ENCODE measurements at regions of chr2 and their contacts with region 1.

Region 1: DNA sequence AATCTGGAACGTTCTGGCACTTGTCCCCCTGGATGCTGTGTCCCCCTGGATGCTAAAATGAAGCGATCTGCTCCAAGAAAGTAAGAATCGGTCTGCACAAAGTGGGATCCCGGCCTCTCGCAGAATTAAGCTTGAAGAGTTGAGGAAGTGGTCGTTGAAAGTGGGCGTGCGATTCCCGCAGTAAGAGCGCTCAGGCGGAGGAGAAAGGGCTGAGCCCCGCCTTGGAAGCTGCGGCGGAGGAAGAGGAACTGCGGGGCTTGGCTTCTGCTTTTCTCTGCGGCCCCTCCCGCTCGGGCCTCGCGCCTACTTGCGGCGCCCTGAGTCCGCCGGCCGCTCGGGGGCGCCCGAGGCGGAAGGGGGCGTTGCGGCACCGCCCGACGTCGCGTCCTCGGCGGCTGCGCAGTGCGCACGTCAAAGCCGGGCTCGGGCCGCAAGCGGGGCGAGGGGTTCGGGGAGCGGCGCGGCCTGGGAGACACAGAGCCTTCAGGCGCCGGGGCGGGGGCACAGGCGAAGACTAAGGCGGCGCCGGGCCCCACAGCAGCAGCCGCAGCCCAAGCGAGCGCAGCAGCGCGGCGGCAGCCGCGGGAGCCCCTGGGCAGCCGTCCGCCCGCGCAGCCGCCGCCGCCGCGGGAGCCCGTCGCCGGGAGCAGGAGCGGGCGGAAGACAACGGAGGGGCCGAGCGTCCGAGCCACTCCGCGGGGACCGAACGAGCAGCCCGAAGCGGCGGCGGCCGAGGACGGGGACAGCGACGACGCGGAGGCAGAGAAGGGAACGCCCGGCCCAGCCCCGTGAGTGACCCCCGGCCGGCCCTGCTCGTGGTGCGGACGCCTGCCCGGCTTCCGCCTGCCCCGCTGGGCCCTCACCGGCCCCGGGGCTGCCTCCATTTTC is at the start of gene CAB39:
- DNase-seq: peak; percentile 73 to 97 (median 84)
- ATAC-seq: peak; percentile 81
- H3K4me3 ChIP-seq: peak within 1 kb of the TSS; percentile 88
- H3K4me3 Mint-ChIP-seq: peak within 1 kb of the TSS; percentile 93
- H3K27ac ChIP-seq: peak within 1 kb of the TSS; percentile 63 to 84
- H3K27ac Mint-ChIP-seq: peak within 1 kb of the TSS; percentile 94
- H3K4me1 ChIP-seq: peaks cover 31% of the 10 kb centered on the region
- H3K4me1 Mint-ChIP-seq: peaks cover 48% of the 10 kb centered on the region
- H3K27me3 ChIP-seq: no peaks in the 10 kb centered on the region
- H3K27me3 Mint-ChIP-seq: no peaks in the 10 kb centered on the region
- CTCF ChIP-seq: peak; percentile 75
- total RNA-seq, gene CAB39: 44.8 to 45.3 TPM

Region 2: GRCh38 chr2:230219419-230220331 is 493.0 kb before region 1 on chr2 and contains the start of gene SP110:
- CTCF ChIA-PET with region 1: no interaction called
- POLR2A ChIA-PET with region 1: interaction called, 7 read pairs
- intact Hi-C with region 1: loop called in 1 of 2 experiments (anchors 5 kb)
- DNase-seq: peak; percentile 59 to 90 (median 72)
- ATAC-seq: peak; percentile 92
- H3K4me3 ChIP-seq: peak within 1 kb of the TSS; percentile 86
- H3K4me3 Mint-ChIP-seq: peak within 1 kb of the TSS; percentile 94
- H3K27ac ChIP-seq: peak within 1 kb of the TSS; percentile 66 to 78
- H3K27ac Mint-ChIP-seq: peak within 1 kb of the TSS; percentile 98
- H3K4me1 ChIP-seq: peaks cover 35% of the 10 kb centered on the region
- H3K4me1 Mint-ChIP-seq: peaks cover 63% of the 10 kb centered on the region
- H3K27me3 ChIP-seq: no peaks in the 10 kb centered on the region
- H3K27me3 Mint-ChIP-seq: no peaks in the 10 kb centered on the region
- CTCF ChIP-seq: no peak
- total RNA-seq, gene SP110: 59.4 to 63.7 TPM

Region 3: DNA sequence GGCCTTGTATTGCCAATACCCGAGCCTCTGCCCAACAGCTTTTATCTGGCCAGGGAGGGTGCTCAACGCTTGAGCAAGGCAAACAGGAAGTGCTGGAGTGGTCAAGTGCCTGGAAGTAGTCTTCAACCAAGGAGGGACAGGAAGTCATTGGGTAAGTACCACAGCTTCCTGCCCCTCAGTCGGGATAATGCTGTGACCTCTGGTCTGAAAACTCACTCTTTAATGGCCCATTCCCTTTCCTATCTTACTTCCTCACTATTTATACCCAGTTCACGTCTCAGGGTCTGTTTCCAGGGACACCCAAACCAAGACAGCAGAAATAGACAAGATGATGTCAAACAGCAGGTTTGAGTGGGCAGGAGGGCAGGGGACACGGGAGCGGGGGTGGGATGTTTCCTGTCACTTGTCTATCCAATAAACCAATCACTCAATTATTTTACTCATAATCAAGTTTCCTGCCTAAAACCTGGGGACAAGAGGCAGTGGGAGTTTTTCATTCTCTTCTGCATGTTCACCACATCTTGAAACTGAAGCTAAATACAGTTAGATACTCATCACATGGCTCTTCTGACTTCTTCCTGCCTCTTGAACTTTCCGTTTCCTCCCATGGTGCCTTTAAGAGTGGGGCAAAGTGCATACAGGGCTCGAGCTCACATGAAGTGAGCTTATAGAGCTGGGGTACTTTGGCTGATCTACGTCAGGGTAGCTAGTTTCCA is 69.0 kb before region 1 on chr2:
- CTCF ChIA-PET with region 1: no interaction called
- POLR2A ChIA-PET with region 1: interaction called, 19 read pairs
- intact Hi-C with region 1: no loop called
- DNase-seq: peak in 5 of 14 experiments; percentile 41 to 78 (median 70)
- ATAC-seq: peak; percentile 97
- H3K4me3 ChIP-seq: peak overlapping the region; percentile 4
- H3K4me3 Mint-ChIP-seq: peak overlapping the region; percentile 52
- H3K27ac ChIP-seq: peak overlapping the region; percentile 73 to 85
- H3K27ac Mint-ChIP-seq: peak overlapping the region; percentile 91
- H3K4me1 ChIP-seq: peaks cover 31% of the 10 kb centered on the region
- H3K4me1 Mint-ChIP-seq: peaks cover 28% of the 10 kb centered on the region
- H3K27me3 ChIP-seq: no peaks in the 10 kb centered on the region
- H3K27me3 Mint-ChIP-seq: no peaks in the 10 kb centered on the region
- CTCF ChIP-seq: no peak

Region 4: GRCh38 chr2:230731512-230731911 is 18.8 kb after region 1 on chr2:
- CTCF ChIA-PET with region 1: interaction called, 5 read pairs
- POLR2A ChIA-PET with region 1: interaction called, 9 read pairs
- intact Hi-C with region 1: loop called in 1 of 2 experiments (anchors 2 kb)
- DNase-seq: no peak
- ATAC-seq: no peak
- H3K4me3 ChIP-seq: no peak overlapping the region
- H3K4me3 Mint-ChIP-seq: no peak overlapping the region
- H3K27ac ChIP-seq: no peak overlapping the region
- H3K27ac Mint-ChIP-seq: no peak overlapping the region
- H3K4me1 ChIP-seq: peaks cover 50% of the 10 kb centered on the region
- H3K4me1 Mint-ChIP-seq: peaks cover 72% of the 10 kb centered on the region
- H3K27me3 ChIP-seq: no peaks in the 10 kb centered on the region
- H3K27me3 Mint-ChIP-seq: no peaks in the 10 kb centered on the region
- CTCF ChIP-seq: no peak

Region 5: DNA sequence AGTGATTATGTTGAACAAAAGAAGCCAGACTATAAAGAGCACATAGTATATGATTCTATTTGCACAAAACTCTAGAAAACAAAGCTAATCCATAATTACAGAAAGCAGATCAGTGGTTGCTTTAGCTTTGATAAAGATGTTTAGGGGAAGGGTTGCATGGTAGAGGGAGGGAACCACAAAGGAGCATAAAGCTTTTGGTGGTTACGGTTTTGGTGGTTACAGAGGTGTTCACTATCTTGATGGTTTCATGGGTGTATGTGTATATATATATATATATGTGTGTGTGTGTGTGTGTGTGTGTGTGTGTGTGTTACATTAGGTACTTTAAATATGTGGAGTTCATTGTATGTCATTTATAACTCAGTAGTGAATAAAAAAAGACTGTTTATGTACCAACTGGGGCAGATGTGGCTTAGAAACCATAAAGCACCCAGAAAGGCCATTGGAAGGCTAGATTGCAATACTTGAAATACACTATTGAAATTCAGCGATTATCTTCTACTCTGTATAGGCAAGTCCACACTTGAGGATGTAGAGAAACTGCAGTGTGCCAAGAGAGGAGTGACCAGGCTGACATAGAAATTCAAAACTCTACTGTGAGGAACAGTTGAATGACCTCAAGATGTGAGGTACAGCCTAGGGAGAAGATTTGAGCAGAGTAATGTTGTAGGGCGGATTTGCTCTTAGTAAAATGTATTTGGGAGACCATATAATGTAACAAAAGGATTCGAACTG is 60.5 kb after region 1 on chr2:
- CTCF ChIA-PET with region 1: no interaction called
- POLR2A ChIA-PET with region 1: interaction called, 11 read pairs
- intact Hi-C with region 1: no loop called
- DNase-seq: peak in 3 of 14 experiments; percentile 32 to 60 (median 55)
- ATAC-seq: peak; percentile 62
- H3K4me3 ChIP-seq: no peak overlapping the region
- H3K4me3 Mint-ChIP-seq: peak overlapping the region; percentile 1
- H3K27ac ChIP-seq: no peak overlapping the region
- H3K27ac Mint-ChIP-seq: peak overlapping the region; percentile 47
- H3K4me1 ChIP-seq: peaks cover 14% of the 10 kb centered on the region
- H3K4me1 Mint-ChIP-seq: peaks cover 91% of the 10 kb centered on the region
- H3K27me3 ChIP-seq: no peaks in the 10 kb centered on the region
- H3K27me3 Mint-ChIP-seq: no peaks in the 10 kb centered on the region
- CTCF ChIP-seq: no peak

Region 6: DNA sequence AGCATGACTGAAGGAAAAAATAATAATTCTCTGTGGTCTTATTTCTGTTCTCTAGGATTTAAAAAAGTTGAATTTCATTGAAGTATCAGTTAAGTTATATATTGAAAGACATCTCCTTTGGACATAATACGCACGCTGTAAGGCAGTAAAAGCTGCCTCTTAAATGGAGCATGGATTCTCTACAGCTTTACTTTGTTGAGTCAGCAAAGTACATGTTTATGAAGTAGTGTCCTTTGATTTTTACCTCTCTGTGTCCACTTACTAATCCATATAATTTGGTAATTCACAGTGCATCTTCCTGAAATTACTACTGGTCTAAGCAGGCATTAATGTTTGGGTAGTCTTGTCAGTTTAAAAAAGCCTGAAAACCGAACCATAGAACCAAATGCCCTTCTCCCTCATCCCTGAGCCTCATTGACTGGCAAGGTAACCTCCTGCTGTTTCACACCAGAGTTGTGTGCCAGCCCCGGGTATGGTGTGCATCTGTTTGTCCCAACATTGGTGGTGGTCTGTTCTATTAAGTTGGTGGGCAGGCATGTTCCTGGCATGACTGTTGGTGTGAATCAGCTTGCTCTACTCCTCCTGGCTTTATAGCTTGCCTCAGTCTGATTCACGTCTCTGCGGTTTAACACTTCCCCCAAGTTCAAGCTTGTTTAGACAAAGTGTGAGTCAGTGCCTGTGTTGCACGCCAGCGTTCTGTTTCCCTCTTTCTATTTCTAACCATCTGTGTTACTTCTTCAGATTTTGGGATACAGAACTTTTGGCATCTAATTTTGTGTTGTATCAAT is 81.1 kb after region 1 on chr2:
- CTCF ChIA-PET with region 1: interaction called, 47 read pairs
- POLR2A ChIA-PET with region 1: interaction called, 30 read pairs
- intact Hi-C with region 1: loop called (anchors 1 kb)
- DNase-seq: peak; percentile 31 to 91 (median 53)
- ATAC-seq: peak; percentile 92
- H3K4me3 ChIP-seq: no peak overlapping the region
- H3K4me3 Mint-ChIP-seq: peak overlapping the region; percentile 46
- H3K27ac ChIP-seq: peak overlapping the region; percentile 34 to 52
- H3K27ac Mint-ChIP-seq: no peak overlapping the region
- H3K4me1 ChIP-seq: peaks cover 47% of the 10 kb centered on the region
- H3K4me1 Mint-ChIP-seq: peaks cover 47% of the 10 kb centered on the region
- H3K27me3 ChIP-seq: no peaks in the 10 kb centered on the region
- H3K27me3 Mint-ChIP-seq: no peaks in the 10 kb centered on the region
- CTCF ChIP-seq: no peak

Region 7: GRCh38 chr2:231056453-231057424 is 344.1 kb after region 1 on chr2 and contains the start of gene PSMD1:
- CTCF ChIA-PET with region 1: no interaction called
- POLR2A ChIA-PET with region 1: no interaction called
- intact Hi-C with region 1: loop called in 1 of 2 experiments (anchors 10 kb)
- DNase-seq: peak; percentile 88 to 97 (median 93)
- ATAC-seq: peak; percentile 81
- H3K4me3 ChIP-seq: peak within 1 kb of the TSS; percentile 95
- H3K4me3 Mint-ChIP-seq: peak within 1 kb of the TSS; percentile 100
- H3K27ac ChIP-seq: peak within 1 kb of the TSS; percentile 80 to 83
- H3K27ac Mint-ChIP-seq: peak within 1 kb of the TSS; percentile 98
- H3K4me1 ChIP-seq: peaks cover 34% of the 10 kb centered on the region
- H3K4me1 Mint-ChIP-seq: peaks cover 60% of the 10 kb centered on the region
- H3K27me3 ChIP-seq: no peaks in the 10 kb centered on the region
- H3K27me3 Mint-ChIP-seq: peaks cover 12% of the 10 kb centered on the region
- CTCF ChIP-seq: peak; percentile 94
- total RNA-seq, gene PSMD1: 27.9 to 31.3 TPM